PC-3 (cell line): ENCODE measurements at regions of chr13 and their contacts with region 1.

Region 1: DNA sequence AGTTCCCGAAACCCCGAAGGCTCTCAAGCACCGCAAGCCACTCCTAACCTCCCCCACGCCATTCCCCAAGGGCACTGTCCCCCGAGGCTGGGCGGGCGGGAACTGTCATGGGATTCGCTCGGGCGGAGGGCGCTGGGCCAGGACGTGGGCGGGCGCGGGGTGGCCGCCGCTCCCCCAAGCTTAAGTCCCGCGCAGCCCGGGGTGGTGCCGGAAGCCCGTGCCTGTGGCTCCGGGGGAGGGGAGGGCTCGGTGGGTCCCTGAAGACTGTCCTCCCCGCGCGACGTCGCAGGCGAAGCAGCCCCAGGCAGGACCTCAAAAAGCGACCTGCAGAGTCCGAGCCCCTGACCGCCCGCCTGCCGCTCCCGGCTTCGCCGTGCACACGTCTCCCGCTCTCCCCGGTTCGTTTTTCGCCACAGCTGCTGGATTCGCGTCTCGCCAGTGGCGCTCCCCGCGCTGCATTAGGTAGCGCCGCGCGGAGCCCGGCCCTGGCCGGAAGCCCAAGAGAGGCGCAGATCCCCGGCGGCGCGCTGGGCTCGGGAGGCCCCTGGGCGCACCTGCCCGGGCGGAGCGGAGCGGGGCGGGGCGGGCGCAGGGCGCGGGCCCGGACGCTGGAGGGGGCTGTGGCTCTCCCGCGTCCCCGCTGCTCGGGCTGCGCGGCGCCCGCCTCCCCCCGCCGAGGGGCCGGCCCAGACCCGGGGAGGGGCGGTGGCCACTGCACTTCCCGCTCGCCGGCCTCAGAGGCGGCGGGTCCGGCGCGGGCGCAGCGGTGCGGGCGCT is at the start of gene FARP1:
- DNase-seq: peak; percentile 79
- ATAC-seq: peak; percentile 83
- H3K4me3 ChIP-seq: peak within 1 kb of the TSS; percentile 82
- H3K27ac ChIP-seq: no peak within 1 kb of the TSS
- H3K4me1 ChIP-seq: peaks cover 13% of the 10 kb centered on the region
- H3K27me3 ChIP-seq: no peaks in the 10 kb centered on the region
- CTCF ChIP-seq: no peak
- total RNA-seq, gene FARP1: 18.2 and 20.9 TPM in 2 replicates

Region 2: DNA sequence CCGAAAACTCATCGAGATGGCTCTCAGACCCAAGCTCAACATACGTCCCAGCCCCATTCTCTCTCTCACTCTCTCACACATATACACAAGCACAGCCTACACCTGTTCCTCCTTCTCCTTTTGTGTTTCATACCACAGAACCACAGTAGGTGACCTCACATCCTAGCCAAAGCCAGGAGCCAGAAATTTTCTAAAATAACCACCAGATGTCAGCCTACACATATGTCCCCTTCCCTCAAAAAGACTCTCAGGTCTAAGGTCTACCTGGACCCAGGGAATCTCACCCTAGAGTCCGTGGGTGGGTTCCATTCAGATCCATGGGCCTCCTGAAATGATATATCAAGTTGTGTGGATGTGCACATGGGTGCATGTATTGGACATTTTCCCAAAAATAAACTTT is 293.3 kb before region 1 on chr13:
- CTCF ChIA-PET with region 1: no interaction called
- POLR2A ChIA-PET with region 1: no interaction called
- intact Hi-C with region 1: loop called (anchors 5 kb)
- DNase-seq: peak; percentile 75
- ATAC-seq: peak; percentile 77
- H3K4me3 ChIP-seq: no peak overlapping the region
- H3K27ac ChIP-seq: no peak overlapping the region
- H3K4me1 ChIP-seq: peaks cover 14% of the 10 kb centered on the region
- H3K27me3 ChIP-seq: no peaks in the 10 kb centered on the region
- CTCF ChIP-seq: peak; percentile 70

Region 3: DNA sequence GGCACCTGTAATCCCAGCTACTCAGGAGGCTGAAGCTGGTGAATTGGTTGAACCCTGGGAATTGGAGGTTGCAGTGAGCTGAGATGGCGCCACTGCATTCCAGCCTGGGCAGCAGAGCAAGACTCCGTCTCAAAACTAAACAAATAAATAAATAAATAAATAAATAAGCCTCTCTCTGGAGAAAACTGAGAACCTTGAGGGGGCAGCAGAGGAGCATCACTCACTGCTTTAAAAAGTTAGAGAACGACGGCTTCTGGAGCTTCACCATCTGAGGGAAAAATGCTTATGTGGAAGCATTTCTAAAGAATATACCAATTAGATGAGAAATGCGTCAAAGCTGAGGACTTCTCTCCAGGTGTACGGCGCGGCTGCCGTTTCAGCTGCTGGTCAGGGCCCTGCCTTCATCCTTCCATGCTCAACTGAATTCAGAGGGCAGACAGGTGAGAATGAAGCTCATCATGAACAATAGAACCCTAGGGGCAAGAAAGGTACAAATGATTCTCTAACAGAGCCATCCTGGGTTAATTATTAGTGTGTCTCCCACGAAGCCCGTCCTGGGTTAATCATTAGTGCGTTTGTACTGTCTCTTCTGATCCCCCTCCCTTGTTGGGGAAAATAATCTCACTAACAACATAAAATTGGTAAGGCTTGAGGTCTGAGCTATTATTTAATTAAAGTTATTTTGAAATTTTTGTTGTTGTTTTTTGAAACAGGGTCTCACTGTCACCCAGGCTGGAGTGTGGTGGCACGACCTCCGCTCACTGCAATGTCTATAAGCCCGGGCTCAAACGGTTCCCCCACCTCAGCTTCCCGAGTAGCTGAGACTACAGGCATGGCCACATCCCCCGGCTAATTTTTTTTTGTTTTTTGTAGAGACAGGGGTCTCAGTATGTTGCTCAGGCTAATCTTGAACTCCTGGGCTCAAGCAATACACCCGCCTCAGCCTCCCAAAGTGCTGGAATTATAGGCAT is 109.0 kb before region 1 on chr13:
- CTCF ChIA-PET with region 1: no interaction called
- POLR2A ChIA-PET with region 1: no interaction called
- intact Hi-C with region 1: loop called (anchors 10 kb)
- DNase-seq: peak; percentile 43
- ATAC-seq: peak; percentile 64
- H3K4me3 ChIP-seq: no peak overlapping the region
- H3K27ac ChIP-seq: no peak overlapping the region
- H3K4me1 ChIP-seq: no peaks in the 10 kb centered on the region
- H3K27me3 ChIP-seq: no peaks in the 10 kb centered on the region
- CTCF ChIP-seq: peak; percentile 30; the same call in 1 of the 2 replicates

Region 4: DNA sequence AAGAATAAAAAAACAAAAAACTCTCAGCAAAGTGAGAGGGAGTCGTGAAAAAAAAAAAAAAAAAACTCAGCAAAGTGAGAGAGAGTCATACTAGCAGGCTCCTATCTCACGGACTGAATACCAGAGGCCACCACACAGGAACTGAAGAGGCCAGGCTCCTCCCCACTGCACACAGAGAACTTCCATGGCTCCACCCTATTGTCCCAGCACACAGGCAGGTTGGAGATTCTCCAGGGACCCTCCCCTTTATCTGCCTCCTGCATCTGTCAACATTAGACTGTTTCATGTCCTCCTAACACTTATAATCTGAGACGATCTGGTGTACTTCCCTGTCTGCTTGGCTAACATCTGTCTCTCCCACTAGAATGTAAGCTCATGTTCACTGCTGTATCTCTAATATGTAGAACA is 36.6 kb before region 1 on chr13:
- CTCF ChIA-PET with region 1: no interaction called
- POLR2A ChIA-PET with region 1: no interaction called
- intact Hi-C with region 1: no loop called
- DNase-seq: peak; percentile 23
- ATAC-seq: peak; percentile 27; the same call in 1 of the 2 replicates
- H3K4me3 ChIP-seq: no peak overlapping the region
- H3K27ac ChIP-seq: no peak overlapping the region
- H3K4me1 ChIP-seq: no peaks in the 10 kb centered on the region
- H3K27me3 ChIP-seq: no peaks in the 10 kb centered on the region
- CTCF ChIP-seq: no peak

Region 5: DNA sequence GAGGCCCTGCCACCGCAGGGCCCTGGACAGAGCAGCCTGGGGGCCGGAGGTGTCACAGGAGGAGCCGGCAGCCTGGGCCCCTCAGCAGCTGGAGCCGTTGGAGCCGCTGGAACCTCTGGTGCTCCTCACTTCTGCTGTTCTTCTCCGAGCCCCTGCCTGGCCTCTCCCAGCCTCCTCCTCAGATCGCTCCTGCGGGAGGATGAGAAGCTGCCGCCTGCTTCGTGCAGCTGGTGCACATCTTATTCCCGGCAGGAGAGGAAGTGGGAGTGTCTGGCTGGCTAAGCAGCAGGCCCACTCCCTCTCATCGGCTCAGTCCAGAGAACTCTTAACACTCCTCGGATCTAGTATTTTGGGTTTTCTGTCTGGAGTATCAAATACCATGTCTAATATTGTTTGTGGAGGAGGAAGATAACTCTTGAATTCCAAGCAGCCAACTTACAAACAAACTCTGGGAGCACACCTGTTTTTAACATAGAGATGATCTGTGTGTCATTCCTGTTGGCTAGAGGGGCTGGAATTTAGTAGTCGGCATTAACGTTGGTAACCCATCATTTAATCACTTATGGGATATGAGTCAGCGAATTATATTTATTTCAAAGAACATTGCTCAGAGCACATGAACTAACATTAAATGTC is 71.6 kb after region 1 on chr13:
- CTCF ChIA-PET with region 1: no interaction called
- POLR2A ChIA-PET with region 1: no interaction called
- intact Hi-C with region 1: loop called (anchors 1 kb)
- DNase-seq: peak; percentile 62
- ATAC-seq: peak; percentile 71
- H3K4me3 ChIP-seq: peak overlapping the region; percentile 47
- H3K27ac ChIP-seq: peak overlapping the region; percentile 97
- H3K4me1 ChIP-seq: peaks cover 53% of the 10 kb centered on the region
- H3K27me3 ChIP-seq: no peaks in the 10 kb centered on the region
- CTCF ChIP-seq: no peak

Region 6: DNA sequence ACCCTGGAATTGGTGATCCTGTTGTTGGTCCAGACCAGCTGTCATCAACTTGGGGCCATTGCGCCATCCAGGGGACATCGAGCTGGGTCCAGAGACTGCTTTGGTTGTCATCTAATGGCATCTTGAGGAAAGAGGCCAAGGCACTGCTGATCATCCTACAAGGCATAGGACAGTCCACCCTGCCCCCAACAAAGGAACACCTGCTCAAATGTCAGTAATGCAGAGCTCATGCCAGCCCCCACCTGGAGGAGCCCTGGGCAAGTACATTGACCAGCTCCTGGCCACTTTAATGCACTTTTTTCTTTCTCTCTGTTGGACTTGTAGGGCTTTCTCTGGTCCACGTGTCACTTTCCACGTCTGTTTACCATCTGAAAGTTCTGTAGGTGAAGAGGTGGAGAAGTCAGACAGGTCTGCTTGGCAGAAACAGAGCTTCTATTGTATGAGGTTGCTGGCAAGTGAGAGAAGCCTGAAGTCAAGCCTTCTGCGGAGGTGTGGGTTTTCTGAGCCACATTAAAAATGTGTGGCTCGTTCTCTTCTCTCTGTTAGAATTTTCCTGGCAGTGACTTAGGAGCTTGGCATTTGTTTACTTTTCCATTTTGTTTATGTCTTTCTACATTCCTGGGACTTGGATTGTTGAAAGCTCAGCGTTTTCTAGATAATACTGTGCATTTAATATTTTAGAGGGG is 158.5 kb after region 1 on chr13:
- CTCF ChIA-PET with region 1: no interaction called
- POLR2A ChIA-PET with region 1: no interaction called
- intact Hi-C with region 1: loop called (anchors 5 kb)
- DNase-seq: peak; percentile 76
- ATAC-seq: peak; percentile 83
- H3K4me3 ChIP-seq: peak overlapping the region; percentile 54
- H3K27ac ChIP-seq: peak overlapping the region; percentile 95
- H3K4me1 ChIP-seq: peaks cover 31% of the 10 kb centered on the region
- H3K27me3 ChIP-seq: no peaks in the 10 kb centered on the region
- CTCF ChIP-seq: no peak

Region 7: GRCh38 chr13:98397221-98397620 is 254.7 kb after region 1 on chr13:
- CTCF ChIA-PET with region 1: no interaction called
- POLR2A ChIA-PET with region 1: no interaction called
- intact Hi-C with region 1: loop called (anchors 1 kb)
- DNase-seq: no peak
- ATAC-seq: peak; percentile 33; the same call in 1 of the 2 replicates
- H3K4me3 ChIP-seq: no peak overlapping the region
- H3K27ac ChIP-seq: no peak overlapping the region
- H3K4me1 ChIP-seq: no peaks in the 10 kb centered on the region
- H3K27me3 ChIP-seq: no peaks in the 10 kb centered on the region
- CTCF ChIP-seq: 0 out of 2 replicates have a peak, but pooled peaks have one; percentile 21

Region 8: DNA sequence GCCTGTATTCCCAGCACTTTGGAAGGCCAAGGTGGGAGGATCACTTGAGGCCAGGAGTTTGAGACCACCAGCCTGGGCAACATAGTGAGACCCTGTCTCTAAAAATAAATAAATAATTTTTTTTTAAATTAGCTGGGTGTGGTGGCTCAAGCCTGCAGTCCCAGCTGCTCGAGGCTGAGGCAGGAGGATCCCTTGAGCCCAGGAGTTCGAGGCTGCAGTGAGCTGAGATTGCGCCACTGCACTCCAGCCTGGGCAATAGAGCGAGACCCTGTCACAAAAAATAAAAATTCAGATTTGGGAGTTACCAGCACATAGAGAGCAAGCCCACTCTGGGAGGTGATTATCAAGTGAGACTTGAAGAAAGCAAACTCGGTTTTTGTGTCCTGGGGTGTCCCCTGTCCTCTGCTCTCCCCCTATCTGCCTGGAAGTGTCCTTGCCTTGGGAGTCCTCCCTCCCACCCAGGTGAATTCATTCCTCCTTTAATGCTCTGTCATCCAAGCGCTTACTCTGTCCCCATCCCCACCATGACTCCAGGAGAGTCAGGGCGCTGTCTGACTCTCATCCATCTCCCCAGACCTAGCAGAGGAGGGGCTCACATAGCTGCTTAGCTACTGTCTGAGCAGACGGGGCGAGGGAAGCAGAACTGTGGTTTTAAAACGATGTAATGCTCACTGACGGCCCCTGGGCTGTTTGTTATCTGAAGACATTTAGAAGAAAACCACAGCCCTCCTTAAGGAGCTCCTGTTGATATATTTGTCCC is 287.6 kb after region 1 on chr13:
- CTCF ChIA-PET with region 1: no interaction called
- POLR2A ChIA-PET with region 1: no interaction called
- intact Hi-C with region 1: loop called (anchors 5 kb)
- DNase-seq: no peak
- ATAC-seq: no peak
- H3K4me3 ChIP-seq: no peak overlapping the region
- H3K27ac ChIP-seq: no peak overlapping the region
- H3K4me1 ChIP-seq: no peaks in the 10 kb centered on the region
- H3K27me3 ChIP-seq: no peaks in the 10 kb centered on the region
- CTCF ChIP-seq: no peak